Endothelial cell of umbilical vein (primary cell): ENCODE measurements at regions of chr7 and their contacts with region 1.

Region 1: DNA sequence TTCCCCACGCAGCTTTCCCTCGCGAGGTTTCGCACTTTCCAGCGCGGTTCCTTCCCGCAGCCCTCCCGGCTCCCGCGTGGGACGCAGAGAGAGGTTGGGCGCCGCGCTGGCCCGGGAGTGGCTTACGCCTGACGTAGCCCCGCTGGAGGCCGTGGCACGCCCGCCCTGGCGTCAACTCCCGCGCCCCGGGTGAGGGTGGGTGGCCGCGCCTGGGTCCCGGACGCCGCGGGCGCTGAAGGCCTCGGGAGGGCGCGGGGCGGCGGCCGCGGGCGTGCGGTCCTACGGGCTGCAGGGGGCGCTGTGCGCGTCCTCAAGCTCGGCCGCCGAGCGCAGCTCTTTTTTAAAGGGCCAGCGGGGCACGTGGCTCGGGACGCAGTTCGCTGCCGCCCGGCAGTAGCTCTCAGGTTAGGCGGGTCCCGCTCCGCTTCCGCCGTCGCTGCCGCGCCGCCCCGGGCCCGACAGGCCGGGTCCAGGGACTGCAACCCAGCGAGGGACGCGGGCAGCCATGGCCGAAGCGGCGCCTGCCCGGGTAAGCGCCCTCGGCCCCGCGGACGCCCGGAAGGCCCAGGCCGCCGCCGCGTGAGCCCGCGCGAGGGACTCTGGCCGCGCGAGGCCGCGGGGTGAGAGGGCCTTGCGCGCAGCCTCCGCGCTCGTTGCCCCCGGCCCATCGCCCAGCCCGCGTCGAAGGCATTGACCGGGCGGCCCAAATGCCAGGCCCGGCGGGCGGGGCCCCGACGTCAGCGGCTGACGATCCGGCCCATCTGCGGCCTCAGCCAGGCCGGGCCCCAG is at the start of gene ZNF783:
- DNase-seq: peak; percentile 85
- H3K4me3 ChIP-seq: peak within 1 kb of the TSS; percentile 19 to 61 (median 44)
- H3K27ac ChIP-seq: peak within 1 kb of the TSS; percentile 55
- H3K4me1 ChIP-seq: peaks cover 3% of the 10 kb centered on the region
- H3K27me3 ChIP-seq: no peaks in the 10 kb centered on the region
- CTCF ChIP-seq: peak; percentile 71 to 87
- POLR2A ChIP-seq: no peak
- total RNA-seq, gene ZNF783: 9.2 and 9.8 TPM in 2 replicates

Region 2: GRCh38 chr7:149147072-149147751 is 114.8 kb before region 1 on chr7 and contains the start of gene ZNF398:
- CTCF ChIA-PET with region 1: interaction called, 10 read pairs
- POLR2A ChIA-PET with region 1: no interaction called
- dilution Hi-C with region 1: no loop called
- intact Hi-C with region 1: no loop called
- DNase-seq: peak; percentile 75
- H3K4me3 ChIP-seq: peak within 1 kb of the TSS; percentile 74 to 98 (median 87)
- H3K27ac ChIP-seq: peak within 1 kb of the TSS; percentile 57
- H3K4me1 ChIP-seq: peaks cover 4% of the 10 kb centered on the region
- H3K27me3 ChIP-seq: no peaks in the 10 kb centered on the region
- CTCF ChIP-seq: peak; percentile 42 to 79
- POLR2A ChIP-seq: peak; percentile 63
- total RNA-seq, gene ZNF398: 8.6 and 10.6 TPM in 2 replicates

Region 3: DNA sequence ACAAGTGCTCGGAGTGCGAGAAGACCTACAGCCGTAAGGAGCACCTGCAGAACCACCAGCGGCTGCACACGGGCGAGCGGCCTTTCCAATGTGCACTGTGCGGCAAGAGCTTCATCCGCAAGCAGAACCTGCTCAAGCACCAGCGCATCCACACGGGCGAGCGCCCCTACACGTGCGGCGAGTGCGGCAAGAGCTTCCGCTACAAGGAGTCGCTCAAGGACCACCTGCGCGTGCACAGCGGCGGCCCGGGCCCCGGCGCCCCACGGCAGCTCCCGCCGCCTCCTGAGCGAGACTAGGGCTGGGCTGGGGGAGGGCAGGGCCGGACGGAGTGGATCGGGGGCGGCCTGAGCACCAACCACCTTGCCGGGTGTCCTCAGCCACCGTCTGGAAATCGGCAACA is 37.7 kb before region 1 on chr7:
- CTCF ChIA-PET with region 1: no interaction called
- POLR2A ChIA-PET with region 1: no interaction called
- dilution Hi-C with region 1: no loop called
- intact Hi-C with region 1: no loop called
- DNase-seq: no peak
- H3K4me3 ChIP-seq: no peak overlapping the region
- H3K27ac ChIP-seq: no peak overlapping the region
- H3K4me1 ChIP-seq: no peaks in the 10 kb centered on the region
- H3K27me3 ChIP-seq: no peaks in the 10 kb centered on the region
- CTCF ChIP-seq: no peak
- POLR2A ChIP-seq: no peak

Region 4: DNA sequence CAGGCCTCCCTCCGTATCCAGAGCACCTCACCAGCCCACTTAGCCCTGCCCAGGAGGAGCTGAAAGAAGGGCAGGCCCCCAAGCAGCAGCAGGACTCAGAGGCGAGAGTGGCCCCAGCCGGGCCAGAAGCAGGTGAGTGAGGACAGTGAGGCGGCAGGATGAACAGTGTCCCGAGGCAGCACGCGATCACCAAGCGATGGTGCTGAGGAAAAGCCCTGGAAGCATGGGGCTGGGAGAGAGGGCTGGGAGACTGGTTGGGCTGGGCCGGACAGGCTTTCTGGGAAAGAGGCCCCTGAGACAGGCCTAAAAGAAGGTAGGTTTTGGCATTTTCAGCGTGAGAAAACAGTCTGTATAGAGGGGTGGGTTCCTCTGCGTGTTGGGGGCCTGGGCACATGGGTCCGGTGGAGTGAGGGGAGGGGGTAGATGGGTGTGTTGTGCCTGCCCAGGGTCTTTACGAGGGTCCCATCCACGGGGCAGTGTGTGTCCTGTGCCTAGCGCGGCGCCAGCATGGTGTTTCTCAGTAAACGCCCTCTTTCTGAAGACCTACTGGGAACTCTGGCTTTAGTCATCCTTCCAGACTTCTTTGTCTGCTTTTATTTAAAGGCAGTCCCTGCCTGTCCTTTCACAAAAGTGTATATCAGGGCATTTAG is 16.5 kb after region 1 on chr7:
- CTCF ChIA-PET with region 1: interaction called, 8 read pairs
- POLR2A ChIA-PET with region 1: interaction called, 11 read pairs
- dilution Hi-C with region 1: no loop called
- intact Hi-C with region 1: no loop called
- DNase-seq: no peak
- H3K4me3 ChIP-seq: no peak overlapping the region
- H3K27ac ChIP-seq: no peak overlapping the region
- H3K4me1 ChIP-seq: no peaks in the 10 kb centered on the region
- H3K27me3 ChIP-seq: no peaks in the 10 kb centered on the region
- CTCF ChIP-seq: no peak
- POLR2A ChIP-seq: no peak

Region 5: DNA sequence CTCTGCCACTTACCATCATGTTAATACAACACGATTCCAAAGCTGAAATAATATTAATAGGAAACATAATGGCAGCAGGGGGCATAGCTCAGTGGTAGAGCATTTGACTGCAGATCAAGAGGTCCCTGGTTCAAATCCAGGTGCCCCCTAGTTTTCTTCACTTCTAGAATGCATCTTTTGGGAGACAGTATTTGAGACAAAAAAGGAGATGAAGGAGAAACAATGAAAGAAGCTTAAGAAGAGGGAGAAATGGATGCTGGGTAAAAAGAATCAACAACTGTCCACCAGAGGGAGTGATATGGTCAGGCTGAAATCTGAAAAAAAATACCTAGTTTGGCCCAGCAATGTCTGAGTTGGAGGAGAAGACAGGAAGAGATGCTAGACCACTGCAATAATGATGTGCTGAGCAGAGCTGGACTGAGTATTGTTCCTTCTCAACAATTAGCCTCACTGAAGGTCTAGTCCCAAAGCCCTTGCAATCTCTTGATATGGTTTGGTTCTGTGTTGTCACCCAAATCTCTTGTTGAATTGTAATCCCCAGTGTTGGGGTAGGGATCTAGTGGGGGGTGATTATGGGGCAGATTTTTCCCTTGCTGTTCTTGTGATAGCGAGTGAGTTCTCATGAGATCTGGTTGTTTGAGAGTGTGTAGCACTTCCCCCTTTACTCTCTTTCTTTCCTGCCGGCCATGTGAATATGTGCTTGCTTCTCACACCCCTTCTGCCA is 48.3 kb after region 1 on chr7:
- CTCF ChIA-PET with region 1: interaction called, 14 read pairs
- POLR2A ChIA-PET with region 1: no interaction called
- dilution Hi-C with region 1: no loop called
- intact Hi-C with region 1: no loop called
- DNase-seq: peak; percentile 69
- H3K4me3 ChIP-seq: no peak overlapping the region
- H3K27ac ChIP-seq: no peak overlapping the region
- H3K4me1 ChIP-seq: no peaks in the 10 kb centered on the region
- H3K27me3 ChIP-seq: peaks cover 2 to 5% of the 10 kb centered on the region in 2 experiments
- CTCF ChIP-seq: peak; percentile 50 to 61
- POLR2A ChIP-seq: no peak

Region 6: GRCh38 chr7:149460493-149461277 is 198.7 kb after region 1 on chr7 and contains the start of gene ZNF777:
- CTCF ChIA-PET with region 1: interaction called, 6 read pairs
- POLR2A ChIA-PET with region 1: no interaction called
- dilution Hi-C with region 1: no loop called
- intact Hi-C with region 1: loop called (anchors 1 kb)
- DNase-seq: peak; percentile 80
- H3K4me3 ChIP-seq: peak within 1 kb of the TSS; percentile 26 to 82 (median 60)
- H3K27ac ChIP-seq: peak within 1 kb of the TSS; percentile 8
- H3K4me1 ChIP-seq: peaks cover 9% of the 10 kb centered on the region
- H3K27me3 ChIP-seq: no peaks in the 10 kb centered on the region
- CTCF ChIP-seq: peak; percentile 40 to 50
- POLR2A ChIP-seq: peak; percentile 77
- total RNA-seq, gene ZNF777: 11.1 and 12.2 TPM in 2 replicates